CD8-positive, alpha-beta T cell (primary cell): ENCODE measurements at regions of chr9 and their contacts with region 1.

Region 1: DNA sequence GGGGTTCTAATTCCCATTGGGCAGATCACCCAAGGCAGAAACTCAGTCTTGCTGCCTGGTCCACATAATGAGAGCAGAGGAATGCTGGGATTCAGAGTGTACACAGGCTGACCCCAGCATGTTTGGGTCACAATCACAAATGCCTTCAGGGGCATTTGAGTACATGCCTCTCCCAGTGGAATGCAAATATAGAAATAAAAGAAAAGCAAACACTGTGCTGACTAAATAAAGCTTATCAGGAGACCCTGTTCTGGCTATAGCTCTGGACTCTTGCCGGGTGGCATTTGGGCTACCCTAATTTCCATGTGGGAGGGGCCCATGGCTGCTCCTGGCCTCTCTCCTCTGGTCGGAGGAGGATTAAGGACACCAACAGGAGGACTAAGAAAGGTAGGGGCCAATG is 121.4 kb downstream of the DOCK8 start:
- DNase-seq: no peak
- ATAC-seq: no peak
- H3K4me3 ChIP-seq: no peak overlapping the region
- H3K4me3 Mint-ChIP-seq: no peak overlapping the region
- H3K27ac ChIP-seq: no peak overlapping the region
- H3K27ac Mint-ChIP-seq: peak overlapping the region; percentile 72
- H3K4me1 ChIP-seq: peaks cover 17% of the 10 kb centered on the region
- H3K4me1 Mint-ChIP-seq: peaks cover 27% of the 10 kb centered on the region
- H3K27me3 ChIP-seq: no peaks in the 10 kb centered on the region
- H3K27me3 Mint-ChIP-seq: no peaks in the 10 kb centered on the region
- CTCF ChIP-seq: no peak

Region 2: DNA sequence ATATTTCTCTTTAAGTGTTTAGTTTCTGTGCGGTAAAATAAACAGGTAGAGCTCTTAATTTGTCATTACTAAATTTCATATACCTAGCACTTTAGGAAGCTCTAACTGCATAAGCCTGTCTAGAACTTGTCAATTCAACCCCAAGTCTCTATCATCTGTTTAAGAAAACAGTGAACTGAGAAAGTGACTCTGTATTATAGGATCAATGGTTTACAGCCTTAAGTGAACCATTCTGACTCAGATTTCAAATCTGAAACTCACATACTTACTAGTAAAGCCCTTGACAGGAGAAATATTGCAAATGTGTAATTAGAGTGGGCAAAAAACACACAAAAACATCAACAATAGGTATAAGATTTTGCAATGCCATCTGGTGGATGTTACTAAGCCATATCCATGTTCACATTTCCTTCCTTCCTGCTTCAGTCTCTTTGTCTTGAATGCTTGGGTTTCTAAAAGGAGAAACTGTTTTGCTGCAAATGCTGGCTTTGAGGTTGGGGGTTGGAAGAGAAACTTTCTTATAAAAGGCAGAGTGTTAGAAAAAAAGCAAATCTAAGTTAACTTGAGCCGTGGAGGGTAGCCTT is 19.6 kb before region 1 on chr9:
- CTCF ChIA-PET with region 1: no interaction called
- POLR2A ChIA-PET with region 1: no interaction called
- intact Hi-C with region 1: no loop called
- DNase-seq: peak in 1 of 9 experiments; percentile 19
- ATAC-seq: no peak
- H3K4me3 ChIP-seq: no peak overlapping the region
- H3K4me3 Mint-ChIP-seq: no peak overlapping the region
- H3K27ac ChIP-seq: no peak overlapping the region
- H3K27ac Mint-ChIP-seq: no peak overlapping the region
- H3K4me1 ChIP-seq: no peaks in the 10 kb centered on the region
- H3K4me1 Mint-ChIP-seq: peaks cover 2% of the 10 kb centered on the region
- H3K27me3 ChIP-seq: no peaks in the 10 kb centered on the region
- H3K27me3 Mint-ChIP-seq: no peaks in the 10 kb centered on the region
- CTCF ChIP-seq: no peak

Region 3: GRCh38 chr9:353077-353476 is 17.0 kb after region 1 on chr9:
- CTCF ChIA-PET with region 1: interaction called, 3 read pairs
- POLR2A ChIA-PET with region 1: no interaction called
- intact Hi-C with region 1: loop called in 1 of 2 experiments (anchors 2 kb)
- DNase-seq: no peak
- ATAC-seq: no peak
- H3K4me3 ChIP-seq: no peak overlapping the region
- H3K4me3 Mint-ChIP-seq: no peak overlapping the region
- H3K27ac ChIP-seq: no peak overlapping the region
- H3K27ac Mint-ChIP-seq: peak overlapping the region; percentile 60
- H3K4me1 ChIP-seq: no peaks in the 10 kb centered on the region
- H3K4me1 Mint-ChIP-seq: peaks cover 47% of the 10 kb centered on the region
- H3K27me3 ChIP-seq: no peaks in the 10 kb centered on the region
- H3K27me3 Mint-ChIP-seq: no peaks in the 10 kb centered on the region
- CTCF ChIP-seq: no peak

Region 4: GRCh38 chr9:414595-414994 is 78.6 kb after region 1 on chr9:
- CTCF ChIA-PET with region 1: no interaction called
- POLR2A ChIA-PET with region 1: no interaction called
- intact Hi-C with region 1: loop called in 1 of 2 experiments (anchors 5 kb)
- DNase-seq: no peak
- ATAC-seq: no peak
- H3K4me3 ChIP-seq: no peak overlapping the region
- H3K4me3 Mint-ChIP-seq: no peak overlapping the region
- H3K27ac ChIP-seq: no peak overlapping the region
- H3K27ac Mint-ChIP-seq: peak overlapping the region; percentile 4
- H3K4me1 ChIP-seq: no peaks in the 10 kb centered on the region
- H3K4me1 Mint-ChIP-seq: no peaks in the 10 kb centered on the region
- H3K27me3 ChIP-seq: no peaks in the 10 kb centered on the region
- H3K27me3 Mint-ChIP-seq: no peaks in the 10 kb centered on the region
- CTCF ChIP-seq: no peak